Esophagus muscularis mucosa (tissue), 4 donors: ENCODE measurements at regions of chr7 and their contacts with region 1.

Region 1: GRCh38 chr7:94449148-94449725 is 54.5 kb downstream of the COL1A2 start:
- DNase-seq: no peak
- H3K4me3 ChIP-seq: no peak overlapping the region
- H3K27ac ChIP-seq: no peak overlapping the region
- H3K4me1 ChIP-seq: peaks cover 7 to 17% (median 11%) of the 10 kb centered on the region in 4 donors
- H3K27me3 ChIP-seq: no peaks in the 10 kb centered on the region
- CTCF ChIP-seq: peak; percentile 58 to 75 (median 64)
- EP300 ChIP-seq: no peak
- POLR2A ChIP-seq: no peak

Region 2: GRCh38 chr7:94313926-94314325 is 135.3 kb before region 1 on chr7:
- intact Hi-C with region 1: no loop called
- DNase-seq: no peak
- H3K4me3 ChIP-seq: no peak overlapping the region
- H3K27ac ChIP-seq: peak overlapping the region; percentile 53 to 62 (median 58)
- H3K4me1 ChIP-seq: peaks cover 0 to 21% (median 20%) of the 10 kb centered on the region in 4 donors
- H3K27me3 ChIP-seq: no peaks in the 10 kb centered on the region
- CTCF ChIP-seq: no peak
- EP300 ChIP-seq: no peak
- POLR2A ChIP-seq: no peak

Region 3: GRCh38 chr7:94657771-94658693 is 208.8 kb after region 1 on chr7:
- intact Hi-C with region 1: loop called (anchors 5 kb)
- DNase-seq: peak; percentile 95
- H3K4me3 ChIP-seq: peak overlapping the region; percentile 67 to 82 (median 74)
- H3K27ac ChIP-seq: peak overlapping the region; percentile 55 to 84 (median 72)
- H3K4me1 ChIP-seq: peaks cover 3 to 23% (median 16%) of the 10 kb centered on the region in 4 donors
- H3K27me3 ChIP-seq: peaks cover 0 to 3% (median 0%) of the 10 kb centered on the region in 4 donors
- CTCF ChIP-seq: no peak
- EP300 ChIP-seq: no peak
- POLR2A ChIP-seq: no peak

Region 4: GRCh38 chr7:95246831-95247370 is 797.7 kb after region 1 on chr7:
- intact Hi-C with region 1: loop called (anchors 5 kb)
- DNase-seq: no peak
- H3K4me3 ChIP-seq: no peak overlapping the region
- H3K27ac ChIP-seq: no peak overlapping the region
- H3K4me1 ChIP-seq: peaks cover 0 to 8% (median 0%) of the 10 kb centered on the region in 4 donors
- H3K27me3 ChIP-seq: no peaks in the 10 kb centered on the region
- CTCF ChIP-seq: peak; percentile 63 to 66 (median 65)
- EP300 ChIP-seq: no peak
- POLR2A ChIP-seq: no peak